Transverse colon (tissue), 4 donors: ENCODE measurements at regions of chr3 and their contacts with region 1.

Region 1: DNA sequence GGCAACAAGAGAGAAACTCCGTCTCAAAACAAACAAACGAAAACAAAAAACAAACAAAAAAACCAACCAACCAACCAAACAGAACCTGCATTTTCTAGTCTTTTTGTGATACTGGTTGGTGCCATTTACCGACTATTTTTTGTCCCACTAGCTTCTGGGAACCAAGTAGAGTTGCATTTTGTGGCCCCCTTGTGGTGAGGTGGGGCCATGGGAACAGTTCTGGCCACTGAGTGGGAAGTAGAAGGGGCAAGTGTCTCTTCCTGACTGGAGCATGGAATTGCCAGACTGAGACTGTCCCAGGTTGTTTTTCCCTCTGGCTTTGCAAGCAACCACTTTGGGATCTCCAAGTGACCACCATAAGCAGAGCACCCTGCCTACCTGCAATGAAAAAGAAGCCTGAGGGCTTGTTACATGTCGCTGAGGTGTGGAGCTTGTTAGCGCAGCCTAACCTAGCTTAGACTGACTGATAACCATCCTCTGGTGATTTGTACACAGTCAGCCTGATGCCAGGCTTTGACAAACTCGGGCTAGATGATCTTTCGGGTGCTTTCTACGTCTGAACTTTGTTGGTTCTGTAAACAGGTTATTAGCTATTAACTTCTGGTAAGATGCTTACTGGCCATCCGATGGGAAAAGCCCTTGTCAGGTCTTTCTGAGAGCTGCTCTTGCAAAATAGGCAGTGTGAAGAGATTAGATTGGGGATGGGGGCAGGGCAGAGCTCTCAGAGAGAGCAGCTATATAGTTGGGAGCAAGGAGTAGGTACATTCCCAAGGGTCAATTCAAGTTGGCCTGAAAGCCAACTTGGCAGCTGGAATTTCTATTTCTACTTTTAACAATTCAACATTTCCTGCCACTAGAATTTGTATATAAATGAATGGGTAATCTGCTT is 172.2 kb downstream of the SSR3 start:
- DNase-seq: peak; percentile 34
- H3K4me3 ChIP-seq: no peak overlapping the region
- H3K27ac ChIP-seq: peak overlapping the region in 1 of 4 donors; percentile 30
- H3K4me1 ChIP-seq: peaks cover 0 to 6% (median 3%) of the 10 kb centered on the region in 4 donors
- H3K27me3 ChIP-seq: no peaks in the 10 kb centered on the region
- CTCF ChIP-seq: peak; percentile 43 to 68 (median 63)
- EP300 ChIP-seq: no peak
- POLR2A ChIP-seq: no peak

Region 2: DNA sequence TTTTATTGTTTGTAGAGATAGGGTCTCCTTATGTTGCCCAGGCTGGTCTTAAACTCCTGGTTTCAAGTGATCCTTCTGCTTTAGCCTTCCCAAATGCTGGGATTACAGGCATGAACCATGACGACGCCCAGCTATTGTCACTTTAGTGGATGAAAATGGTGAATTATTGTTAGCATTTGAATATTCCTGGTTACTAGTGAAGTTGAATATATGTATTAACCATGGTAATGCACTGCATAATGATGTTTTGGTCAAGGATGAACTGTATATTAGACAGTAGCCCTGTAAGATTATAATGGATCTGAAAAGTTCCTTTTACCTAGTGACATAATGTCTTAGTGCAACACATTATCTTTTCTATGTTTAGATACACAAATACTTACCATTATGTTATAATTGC is 312.7 kb before region 1 on chr3:
- in situ Hi-C with region 1: no loop called
- intact Hi-C with region 1: no loop called
- DNase-seq: no peak
- H3K4me3 ChIP-seq: no peak overlapping the region
- H3K27ac ChIP-seq: no peak overlapping the region
- H3K4me1 ChIP-seq: no peaks in the 10 kb centered on the region
- H3K27me3 ChIP-seq: no peaks in the 10 kb centered on the region
- CTCF ChIP-seq: no peak
- EP300 ChIP-seq: no peak
- POLR2A ChIP-seq: no peak

Region 3: GRCh38 chr3:156151824-156152428 is 230.8 kb before region 1 on chr3:
- in situ Hi-C with region 1: loop called in 3 of 4 experiments (anchors 10 to 25 kb)
- intact Hi-C with region 1: no loop called
- DNase-seq: peak; percentile 73
- H3K4me3 ChIP-seq: no peak overlapping the region
- H3K27ac ChIP-seq: peak overlapping the region in 1 of 4 donors; percentile 14
- H3K4me1 ChIP-seq: peaks cover 0 to 11% (median 3%) of the 10 kb centered on the region in 4 donors
- H3K27me3 ChIP-seq: no peaks in the 10 kb centered on the region
- CTCF ChIP-seq: peak; percentile 67 to 77 (median 73)
- EP300 ChIP-seq: no peak
- POLR2A ChIP-seq: no peak

Region 4: GRCh38 chr3:156519758-156520162 is 137.1 kb after region 1 on chr3:
- in situ Hi-C with region 1: no loop called
- intact Hi-C with region 1: no loop called
- DNase-seq: no peak
- H3K4me3 ChIP-seq: no peak overlapping the region
- H3K27ac ChIP-seq: no peak overlapping the region
- H3K4me1 ChIP-seq: peaks cover 0 to 3% (median 0%) of the 10 kb centered on the region in 4 donors
- H3K27me3 ChIP-seq: no peaks in the 10 kb centered on the region
- CTCF ChIP-seq: no peak
- EP300 ChIP-seq: no peak
- POLR2A ChIP-seq: no peak

Region 5: GRCh38 chr3:157261000-157261399 is 878.3 kb after region 1 on chr3:
- in situ Hi-C with region 1: no loop called
- intact Hi-C with region 1: no loop called
- DNase-seq: no peak
- H3K4me3 ChIP-seq: no peak overlapping the region
- H3K27ac ChIP-seq: no peak overlapping the region
- H3K4me1 ChIP-seq: no peaks in the 10 kb centered on the region
- H3K27me3 ChIP-seq: no peaks in the 10 kb centered on the region
- CTCF ChIP-seq: no peak
- EP300 ChIP-seq: no peak
- POLR2A ChIP-seq: no peak